ENCODE measurements at regions of chr13 and their contacts with region 1.

Region 1: GRCh38 chr13:97257800-97258799 is 36.0 kb downstream of the MBNL2 start:
- DNase-seq: peak; percentile 29
- ATAC-seq: peak; percentile 54
- H3K4me3 Mint-ChIP-seq: peak overlapping the region; percentile 19
- H3K27ac Mint-ChIP-seq: peak overlapping the region; percentile 86
- H3K4me1 Mint-ChIP-seq: peaks cover 81% of the 10 kb centered on the region
- H3K27me3 Mint-ChIP-seq: no peaks in the 10 kb centered on the region
- CTCF ChIP-seq: no peak

Region 2: GRCh38 chr13:97289514-97290298 is 31.6 kb after region 1 on chr13:
- CTCF ChIA-PET with region 1: no interaction called
- POLR2A ChIA-PET with region 1: no interaction called
- intact Hi-C with region 1: loop called (anchors 5 kb)
- DNase-seq: no peak
- ATAC-seq: no peak
- H3K4me3 Mint-ChIP-seq: no peak overlapping the region
- H3K27ac Mint-ChIP-seq: peak overlapping the region; percentile 49
- H3K4me1 Mint-ChIP-seq: peaks cover 40% of the 10 kb centered on the region
- H3K27me3 Mint-ChIP-seq: no peaks in the 10 kb centered on the region
- CTCF ChIP-seq: no peak